ENCODE measurements at regions of chr17 and their contacts with region 1.

Region 1: GRCh38 chr17:27760069-27760885 is 40.1 kb downstream of the NOS2 start:
- DNase-seq: peak; percentile 58
- H3K4me3 Mint-ChIP-seq: no peak overlapping the region
- H3K27ac Mint-ChIP-seq: no peak overlapping the region
- H3K4me1 Mint-ChIP-seq: no peaks in the 10 kb centered on the region
- H3K27me3 Mint-ChIP-seq: no peaks in the 10 kb centered on the region

Region 2: DNA sequence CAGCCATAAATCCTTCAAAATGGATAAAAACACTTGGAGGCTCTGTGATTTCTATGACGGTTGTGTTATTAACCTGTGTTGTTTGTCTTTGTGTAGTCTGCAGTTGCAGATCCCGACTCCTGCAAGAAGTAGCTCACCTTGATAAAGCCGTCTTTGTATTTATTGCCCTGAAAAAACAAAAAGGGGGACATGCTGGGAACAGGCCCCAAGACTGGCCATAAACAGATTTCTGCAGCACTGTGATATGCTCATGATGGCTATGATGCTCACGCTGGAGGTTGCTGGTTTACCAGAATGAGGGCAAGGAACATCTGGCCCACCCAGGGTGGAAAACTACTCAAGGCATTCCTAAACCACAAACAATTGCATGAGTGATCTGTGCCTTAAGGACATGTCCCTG is 58.3 kb before region 1 on chr17:
- intact Hi-C with region 1: no loop called
- DNase-seq: no peak
- H3K4me3 Mint-ChIP-seq: no peak overlapping the region
- H3K27ac Mint-ChIP-seq: no peak overlapping the region
- H3K4me1 Mint-ChIP-seq: no peaks in the 10 kb centered on the region
- H3K27me3 Mint-ChIP-seq: peaks cover 5% of the 10 kb centered on the region

Region 3: GRCh38 chr17:27879987-27880608 is 119.8 kb after region 1 on chr17:
- intact Hi-C with region 1: loop called (anchors 1 kb)
- DNase-seq: peak; percentile 58
- H3K4me3 Mint-ChIP-seq: no peak overlapping the region
- H3K27ac Mint-ChIP-seq: no peak overlapping the region
- H3K4me1 Mint-ChIP-seq: peaks cover 17% of the 10 kb centered on the region
- H3K27me3 Mint-ChIP-seq: peaks cover 5% of the 10 kb centered on the region

Measured in activated T-helper 2 cell treated with anti-CD3 and anti-CD28 coated beads, Interferon-gamma antibody, Interleukin-2, Interleukin-4, amounts not matched to agents 10 μg/mL and 5 μg/mL and 100 μg/mL, durations not matched to agents 14 hours and 24 hours and 36 hours (primary cell).